OCI-LY7 (cell line): ENCODE measurements at regions of chr5 and their contacts with region 1.

Region 1: GRCh38 chr5:156934450-156935211 is 28.4 kb downstream of the TIMD4 start:
- DNase-seq: peak; percentile 87
- H3K4me3 ChIP-seq: no peak overlapping the region
- H3K27ac ChIP-seq: peak overlapping the region; percentile 97
- H3K4me1 ChIP-seq: peaks cover 83% of the 10 kb centered on the region
- CTCF ChIP-seq: peak; percentile 100

Region 2: DNA sequence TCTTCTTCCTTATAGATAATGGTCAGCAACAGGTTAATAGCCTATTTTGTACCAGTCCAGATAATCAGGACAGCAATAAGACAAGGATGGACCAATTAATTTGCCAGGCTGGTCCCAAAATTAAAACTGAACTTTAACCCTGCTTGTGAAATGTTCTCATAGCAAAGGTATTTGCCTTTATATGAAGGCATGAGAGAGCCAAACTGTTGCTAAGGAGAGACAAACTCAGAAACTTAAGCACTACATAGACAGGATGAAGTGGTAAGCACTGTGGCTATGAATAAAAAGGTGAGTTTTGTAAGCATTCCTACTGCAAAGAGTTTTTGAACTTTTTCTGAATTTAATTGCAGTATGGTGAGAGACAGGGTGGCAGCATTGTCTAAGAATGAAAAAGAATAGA is 259.2 kb before region 1 on chr5:
- CTCF ChIA-PET with region 1: no interaction called
- POLR2A ChIA-PET with region 1: interaction called, 3 read pairs
- intact Hi-C with region 1: loop called (anchors 5 kb)
- DNase-seq: no peak
- H3K4me3 ChIP-seq: no peak overlapping the region
- H3K27ac ChIP-seq: no peak overlapping the region
- H3K4me1 ChIP-seq: no peaks in the 10 kb centered on the region
- CTCF ChIP-seq: no peak

Region 3: GRCh38 chr5:156835905-156836304 is 98.7 kb before region 1 on chr5:
- CTCF ChIA-PET with region 1: no interaction called
- POLR2A ChIA-PET with region 1: interaction called, 14 read pairs
- intact Hi-C with region 1: loop called (anchors 1 kb)
- DNase-seq: peak; percentile 81
- H3K4me3 ChIP-seq: no peak overlapping the region
- H3K27ac ChIP-seq: peak overlapping the region; percentile 83
- H3K4me1 ChIP-seq: peaks cover 55% of the 10 kb centered on the region
- CTCF ChIP-seq: peak; percentile 86

Region 4: DNA sequence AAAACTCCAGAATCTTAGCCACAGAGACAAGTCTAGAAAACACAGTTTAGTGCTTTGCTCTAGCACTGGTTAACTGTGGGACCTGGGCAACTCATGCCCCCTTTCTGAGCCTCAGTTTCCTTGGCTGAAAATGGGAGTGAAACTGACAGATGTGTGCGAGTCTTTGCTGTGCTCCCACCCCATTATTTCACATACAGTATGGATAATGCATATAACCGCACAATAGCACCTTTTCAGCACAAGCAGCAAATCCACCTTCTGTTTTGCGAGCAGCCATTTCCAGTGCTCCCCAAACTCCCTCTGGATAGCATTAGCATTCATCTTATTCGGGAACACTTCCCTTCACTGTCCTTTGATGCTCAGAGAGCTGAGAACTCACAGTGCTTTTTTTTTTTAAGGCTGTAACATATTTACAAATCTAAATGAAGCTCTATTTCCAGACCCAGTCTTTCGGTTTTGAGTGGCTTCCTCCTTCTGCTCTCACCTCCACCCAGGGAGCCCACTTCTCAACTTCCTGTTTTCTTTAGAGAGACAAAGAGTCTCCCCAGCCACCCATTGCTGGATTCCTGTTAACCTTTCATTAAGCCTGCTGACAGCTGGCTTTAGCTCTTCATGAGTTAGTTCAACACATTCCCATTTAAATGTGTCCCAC is 20.8 kb before region 1 on chr5:
- CTCF ChIA-PET with region 1: interaction called, 6 read pairs
- POLR2A ChIA-PET with region 1: interaction called, 271 read pairs
- intact Hi-C with region 1: loop called (anchors 1 kb)
- DNase-seq: peak; percentile 92
- H3K4me3 ChIP-seq: peak overlapping the region; percentile 51
- H3K27ac ChIP-seq: peak overlapping the region; percentile 95
- H3K4me1 ChIP-seq: peaks cover 95% of the 10 kb centered on the region
- CTCF ChIP-seq: no peak

Region 5: GRCh38 chr5:156971415-156971814 is 36.8 kb after region 1 on chr5:
- CTCF ChIA-PET with region 1: interaction called, 5 read pairs
- POLR2A ChIA-PET with region 1: interaction called, 70 read pairs
- intact Hi-C with region 1: no loop called
- DNase-seq: no peak
- H3K4me3 ChIP-seq: no peak overlapping the region
- H3K27ac ChIP-seq: no peak overlapping the region
- H3K4me1 ChIP-seq: peaks cover 49% of the 10 kb centered on the region
- CTCF ChIP-seq: no peak

Region 6: GRCh38 chr5:157130925-157131324 is 196.3 kb after region 1 on chr5:
- CTCF ChIA-PET with region 1: interaction called, 3 read pairs
- POLR2A ChIA-PET with region 1: interaction called, 4 read pairs
- intact Hi-C with region 1: loop called (anchors 1 kb)
- DNase-seq: peak; percentile 66
- H3K4me3 ChIP-seq: no peak overlapping the region
- H3K27ac ChIP-seq: peak overlapping the region; percentile 40
- H3K4me1 ChIP-seq: peaks cover 50% of the 10 kb centered on the region
- CTCF ChIP-seq: no peak

Region 7: DNA sequence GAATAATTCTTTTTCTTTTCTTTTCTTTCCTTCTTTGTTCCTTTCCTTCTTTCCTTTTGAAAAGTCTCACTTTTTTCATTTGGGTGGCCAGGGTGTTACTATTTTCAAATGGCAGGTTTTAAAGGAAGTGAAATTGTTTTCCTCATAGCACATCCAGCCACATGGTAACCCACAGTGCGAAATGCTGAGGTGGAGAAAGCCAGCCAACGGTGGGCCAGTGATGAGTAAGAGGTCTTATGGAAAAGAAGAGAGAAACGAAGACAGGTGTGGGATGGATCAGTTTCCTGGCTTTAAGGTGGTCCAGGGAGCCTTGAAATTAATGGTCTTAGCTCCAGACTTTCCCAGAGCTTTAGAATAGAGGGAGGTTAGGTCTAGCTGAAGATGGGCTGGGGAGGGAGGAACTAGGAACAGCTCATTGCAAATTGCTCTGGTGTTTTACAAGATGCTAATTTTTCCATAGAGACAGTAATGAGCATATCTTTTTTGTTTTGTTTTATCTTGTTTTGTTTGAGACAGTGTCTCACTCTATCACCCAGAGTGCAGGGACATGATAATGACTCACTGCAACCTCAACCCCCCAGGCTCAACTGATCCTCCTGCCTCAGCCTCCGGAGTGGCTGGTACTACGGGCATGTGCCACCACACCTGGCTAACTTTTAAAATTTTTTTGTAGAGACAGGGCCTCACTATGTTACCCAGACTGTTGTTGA is 263.8 kb after region 1 on chr5:
- CTCF ChIA-PET with region 1: no interaction called
- POLR2A ChIA-PET with region 1: no interaction called
- intact Hi-C with region 1: no loop called
- DNase-seq: no peak
- H3K4me3 ChIP-seq: no peak overlapping the region
- H3K27ac ChIP-seq: no peak overlapping the region
- H3K4me1 ChIP-seq: no peaks in the 10 kb centered on the region
- CTCF ChIP-seq: no peak